Gastrocnemius medialis (tissue), 4 donors: ENCODE measurements at regions of chr1 and their contacts with region 1.

Region 1: DNA sequence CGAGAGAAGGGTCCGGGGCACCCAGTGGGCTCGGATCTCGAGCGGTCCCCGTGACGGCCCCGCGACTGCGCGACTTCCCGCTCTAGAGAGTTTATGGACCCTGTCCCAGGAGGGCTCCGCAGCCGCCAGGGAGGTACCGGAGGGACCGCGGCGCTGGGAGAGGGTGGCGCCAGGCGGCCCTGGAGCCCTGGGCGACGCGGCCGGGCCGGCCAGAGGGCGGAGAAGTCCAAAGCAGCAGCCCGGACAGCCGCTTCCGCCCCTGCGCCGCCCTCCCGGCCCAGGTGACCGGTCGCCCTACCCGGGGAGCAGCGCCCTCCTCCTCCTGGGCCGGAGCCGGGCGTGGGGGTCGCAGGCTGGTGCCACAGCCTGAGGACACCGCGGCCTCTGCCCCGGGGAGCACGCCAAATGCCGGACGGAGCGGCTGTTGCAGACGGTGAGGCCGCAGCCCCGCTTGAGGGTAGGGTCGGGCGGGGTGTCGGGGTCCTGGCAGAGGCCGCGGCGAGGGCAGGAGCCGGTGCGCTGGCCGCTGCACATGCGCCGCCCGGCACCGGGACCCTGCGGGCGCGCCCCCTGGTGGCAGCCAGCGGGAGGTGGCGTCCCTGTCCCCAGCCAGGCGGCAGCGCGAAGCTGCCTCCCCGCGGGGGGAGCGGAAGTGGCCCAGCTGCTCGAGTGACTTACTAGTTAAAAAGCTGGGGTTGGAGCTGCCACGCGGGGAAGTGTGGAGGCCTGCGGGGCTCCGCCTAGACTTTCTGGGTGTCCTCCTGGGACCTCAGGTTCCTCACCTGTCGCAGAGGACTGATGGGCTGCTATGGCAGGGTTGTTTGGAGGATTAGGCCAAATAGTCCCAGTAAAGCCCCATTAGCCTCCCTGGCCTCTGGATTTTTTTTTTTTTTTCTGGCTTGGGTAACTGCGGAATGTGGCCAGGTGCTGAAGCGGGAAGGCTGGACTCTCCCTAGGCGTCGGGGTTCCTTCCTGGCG is 20.9 kb upstream of the ZNF678 start:
- DNase-seq: peak; percentile 68 to 84
- ATAC-seq: peak; percentile 92 to 93
- H3K4me3 ChIP-seq: peak overlapping the region; percentile 75 to 91 (median 88)
- H3K27ac ChIP-seq: peak overlapping the region; percentile 82 to 94 (median 88)
- H3K4me1 ChIP-seq: peaks cover 5 to 14% of the 10 kb centered on the region in 2 donors
- H3K27me3 ChIP-seq: no peaks in the 10 kb centered on the region
- CTCF ChIP-seq: peak; percentile 90 to 99 (median 97)
- POLR2A ChIP-seq: peak in 1 of 2 donors; percentile 46

Region 2: DNA sequence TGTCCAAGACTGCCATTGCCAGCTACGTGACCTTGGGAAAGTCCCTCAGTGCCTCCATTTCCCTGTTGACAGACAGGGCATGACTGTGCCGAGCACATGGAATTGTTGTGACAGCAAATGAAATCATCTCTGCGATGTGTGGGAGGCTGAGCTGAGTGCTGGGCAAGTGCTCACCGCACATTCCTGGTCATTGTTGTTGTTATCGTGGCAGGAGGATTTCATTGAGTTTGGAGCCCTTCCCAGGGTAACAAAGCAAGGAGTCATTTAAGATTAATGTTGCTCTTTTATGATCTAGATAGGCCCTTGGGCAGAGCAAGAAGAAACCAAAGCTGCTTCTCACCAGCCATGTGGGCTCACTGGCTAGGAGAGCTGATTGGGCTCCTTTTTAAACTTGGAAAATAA is 763.8 kb before region 1 on chr1:
- in situ Hi-C with region 1: no loop called
- intact Hi-C with region 1: no loop called
- DNase-seq: no peak
- ATAC-seq: peak in 1 of 2 donors; percentile 52
- H3K4me3 ChIP-seq: no peak overlapping the region
- H3K27ac ChIP-seq: no peak overlapping the region
- H3K4me1 ChIP-seq: no peaks in the 10 kb centered on the region
- H3K27me3 ChIP-seq: no peaks in the 10 kb centered on the region
- CTCF ChIP-seq: no peak
- POLR2A ChIP-seq: no peak

Region 3: DNA sequence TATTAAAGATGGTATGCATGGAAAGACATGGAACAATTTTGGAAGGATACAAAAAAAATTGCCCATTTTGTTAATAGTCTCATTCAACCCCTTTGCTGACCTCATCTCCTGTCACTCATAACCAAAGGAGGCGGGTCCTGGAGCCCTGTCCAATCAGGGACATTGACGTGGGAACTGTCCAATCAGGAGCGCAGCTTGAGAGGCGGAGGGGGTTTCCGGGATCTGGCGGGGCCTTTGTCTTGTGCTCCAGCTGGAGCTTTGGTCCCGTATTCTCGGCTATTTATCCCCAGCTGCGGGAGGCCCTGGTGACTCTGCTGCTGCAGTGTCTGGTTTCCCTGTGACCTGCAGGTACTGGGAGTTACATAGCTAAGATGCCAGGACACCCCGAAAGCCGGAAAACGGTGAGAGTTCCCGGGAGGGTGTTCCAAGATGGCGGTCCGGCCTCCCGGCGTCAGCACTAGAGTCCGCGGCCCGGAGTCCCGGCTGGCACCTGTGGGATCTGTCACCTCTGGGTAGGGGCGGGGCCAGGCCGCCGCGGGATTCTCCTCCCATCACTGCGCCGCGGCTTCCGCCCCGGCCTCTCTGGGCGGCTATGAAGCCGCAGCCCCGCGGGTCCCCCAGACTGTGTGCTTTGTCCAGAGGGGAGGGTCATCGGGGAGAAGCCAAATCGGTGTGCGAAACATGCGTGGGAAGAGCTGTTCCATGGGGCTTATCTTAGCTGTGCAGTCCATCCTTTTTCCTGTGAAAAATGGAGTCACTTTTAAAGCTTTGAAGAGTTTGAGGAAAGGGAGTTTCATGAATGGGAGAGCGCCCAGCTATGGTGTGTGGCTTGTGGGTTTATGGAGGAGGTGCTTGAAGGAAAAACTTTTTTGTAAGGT is 21.1 kb after region 1 on chr1 and contains the start of gene ZNF678:
- in situ Hi-C with region 1: no loop called
- intact Hi-C with region 1: loop called (anchors 1 kb)
- DNase-seq: peak; percentile 85 to 92
- ATAC-seq: peak; percentile 99
- H3K4me3 ChIP-seq: peak within 1 kb of the TSS; percentile 77 to 87 (median 83)
- H3K27ac ChIP-seq: peak within 1 kb of the TSS; percentile 78 to 85 (median 83)
- H3K4me1 ChIP-seq: peaks cover 8 to 11% of the 10 kb centered on the region in 2 donors
- H3K27me3 ChIP-seq: peaks cover 0 to 9% (median 4%) of the 10 kb centered on the region in 3 donors
- CTCF ChIP-seq: no peak
- POLR2A ChIP-seq: peak in 1 of 2 donors; percentile 35
- total RNA-seq, gene ZNF678: 2.3 to 7.3 (median 4.9) TPM

Region 4: GRCh38 chr1:228087771-228088251 is 545.4 kb after region 1 on chr1:
- in situ Hi-C with region 1: no loop called
- intact Hi-C with region 1: no loop called
- DNase-seq: no peak
- ATAC-seq: no peak
- H3K4me3 ChIP-seq: peak overlapping the region in 1 of 4 donors; percentile 20
- H3K27ac ChIP-seq: peak overlapping the region; percentile 35 to 93 (median 46)
- H3K4me1 ChIP-seq: peaks cover 88 to 89% of the 10 kb centered on the region in 2 donors
- H3K27me3 ChIP-seq: no peaks in the 10 kb centered on the region
- CTCF ChIP-seq: peak in 1 of 5 experiments; percentile 7
- POLR2A ChIP-seq: no peak